ENCODE measurements at regions of chr4 and their contacts with region 1.

Region 1: DNA sequence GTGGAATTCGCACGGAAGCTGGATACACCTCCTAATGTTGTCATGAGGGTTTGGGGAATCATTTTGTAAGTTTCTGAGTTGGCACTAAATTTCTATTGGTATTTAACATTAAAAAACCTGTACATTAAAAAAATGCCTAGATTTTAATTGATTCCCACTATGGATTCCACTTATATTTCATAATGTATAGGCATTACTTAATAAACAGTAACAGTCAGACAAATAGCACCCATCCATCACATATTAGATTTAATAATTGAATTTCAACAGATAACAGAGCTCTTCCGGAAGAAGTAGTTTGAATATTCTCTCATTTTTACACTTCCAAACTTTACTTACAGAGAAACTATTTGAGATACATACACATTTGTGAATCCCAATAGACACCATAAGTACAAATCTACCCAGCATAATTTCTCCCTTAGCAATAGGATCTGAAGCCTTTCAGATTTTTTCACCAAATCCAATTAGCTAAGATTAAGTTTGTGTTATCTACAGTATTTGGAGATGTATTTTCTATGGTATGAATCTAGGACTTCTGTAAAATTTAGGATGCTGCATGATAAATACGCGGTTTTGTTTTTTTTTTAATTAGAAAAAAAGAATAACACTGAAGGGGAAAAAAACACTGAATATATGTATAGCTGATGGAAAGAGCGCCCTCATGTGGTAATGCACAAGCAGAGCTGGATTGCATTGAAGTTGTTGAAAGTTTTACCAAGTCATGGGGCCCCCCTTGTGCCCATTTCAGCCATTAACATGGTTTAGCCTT is 12.2 kb upstream of the ODAM start:
- H3K4me3 ChIP-seq: no peak overlapping the region
- H3K27ac ChIP-seq: no peak overlapping the region
- H3K4me1 ChIP-seq: no peaks in the 10 kb centered on the region
- CTCF ChIP-seq: no peak

Region 2: GRCh38 chr4:69896530-69897116 is 286.7 kb before region 1 on chr4:
- CTCF ChIA-PET with region 1: interaction called, 15 read pairs
- POLR2A ChIA-PET with region 1: no interaction called
- H3K4me3 ChIP-seq: no peak overlapping the region
- H3K27ac ChIP-seq: no peak overlapping the region
- H3K4me1 ChIP-seq: no peaks in the 10 kb centered on the region
- CTCF ChIP-seq: no peak

Region 3: GRCh38 chr4:70008771-70009170 is 174.6 kb before region 1 on chr4:
- CTCF ChIA-PET with region 1: interaction called, 10 read pairs
- POLR2A ChIA-PET with region 1: no interaction called
- H3K4me3 ChIP-seq: no peak overlapping the region
- H3K27ac ChIP-seq: no peak overlapping the region
- H3K4me1 ChIP-seq: no peaks in the 10 kb centered on the region
- CTCF ChIP-seq: no peak

Region 4: DNA sequence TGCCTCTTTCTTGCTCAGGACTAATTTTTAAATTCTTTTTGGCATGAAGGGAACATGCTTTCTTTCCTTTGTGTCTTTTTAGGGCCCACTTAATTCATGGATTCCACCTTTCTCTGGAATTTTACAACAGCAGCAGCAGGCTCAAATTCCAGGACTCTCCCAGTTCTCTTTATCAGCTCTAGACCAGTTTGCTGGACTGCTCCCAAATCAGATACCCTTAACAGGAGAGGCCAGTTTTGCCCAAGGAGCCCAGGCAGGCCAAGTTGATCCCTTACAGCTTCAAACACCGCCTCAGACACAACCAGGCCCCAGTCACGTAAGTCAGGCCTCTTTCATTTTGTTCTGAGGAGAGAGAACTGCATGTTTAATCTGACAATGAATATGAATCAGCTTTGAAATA is 14.5 kb after region 1 on chr4:
- CTCF ChIA-PET with region 1: interaction called, 12 read pairs
- POLR2A ChIA-PET with region 1: no interaction called
- H3K4me3 ChIP-seq: no peak overlapping the region
- H3K27ac ChIP-seq: no peak overlapping the region
- H3K4me1 ChIP-seq: no peaks in the 10 kb centered on the region
- CTCF ChIP-seq: no peak

Measured in HEK293 (cell line).